HepG2 (cell line): ENCODE measurements at regions of chr10 and their contacts with region 1.

Region 1: GRCh38 chr10:86755740-86756510 is 494 bp upstream of the BMPR1A start:
- DNase-seq: peak; percentile 83
- ATAC-seq: peak; percentile 86
- H3K4me3 ChIP-seq: peak overlapping the region; percentile 64 to 97 (median 83)
- H3K27ac ChIP-seq: peak overlapping the region; percentile 98
- H3K4me1 ChIP-seq: peaks cover 49% of the 10 kb centered on the region
- H3K27me3 ChIP-seq: no peaks in the 10 kb centered on the region; a peak in 1 of 5 replicates
- CTCF ChIP-seq: peak; percentile 8; the same call in 1 of the 2 replicates
- EP300 ChIP-seq: peak in 1 of 2 experiments; percentile 19; a peak in 1 of 4 replicates
- POLR2A ChIP-seq: peak; percentile 74 to 84
- RAD21 ChIP-seq: peak; percentile 58

Region 2: DNA sequence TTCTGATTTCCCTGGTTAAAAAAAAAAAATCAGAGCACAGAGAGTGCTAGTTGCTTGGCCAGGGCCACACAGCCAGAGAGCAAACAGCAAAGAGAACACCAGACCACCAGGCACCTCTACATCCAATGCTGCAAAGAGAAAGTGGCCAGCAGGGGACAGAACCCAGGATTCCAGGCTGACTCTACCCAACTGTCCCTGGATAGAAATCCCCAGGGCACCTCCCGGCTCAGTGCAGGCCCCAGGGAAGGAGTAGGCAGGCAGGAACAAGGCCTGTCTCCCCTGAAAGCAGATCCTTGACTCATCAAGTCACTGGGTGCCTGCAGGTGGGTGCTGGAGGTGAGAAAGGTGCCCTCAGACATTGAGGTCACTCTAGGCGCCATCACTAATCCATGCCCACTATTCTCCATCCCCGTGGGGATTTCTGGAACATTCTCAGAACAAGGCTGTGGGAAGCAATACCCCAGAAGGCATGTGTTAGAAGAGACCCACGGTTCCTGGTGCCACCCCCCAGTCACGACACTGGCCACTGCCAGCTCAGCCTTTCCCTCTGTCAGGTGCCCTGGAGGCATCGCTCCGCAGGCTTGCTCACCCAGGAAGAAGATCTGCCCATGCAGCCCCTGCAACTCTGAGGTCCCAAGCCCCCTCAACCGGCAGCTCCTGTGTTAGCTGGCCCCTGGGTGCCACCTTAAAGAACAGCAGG is 544.1 kb before region 1 on chr10:
- CTCF ChIA-PET with region 1: no interaction called
- POLR2A ChIA-PET with region 1: no interaction called
- in situ Hi-C with region 1: no loop called
- intact Hi-C with region 1: no loop called
- DNase-seq: no peak
- ATAC-seq: no peak
- H3K4me3 ChIP-seq: no peak overlapping the region
- H3K27ac ChIP-seq: no peak overlapping the region
- H3K4me1 ChIP-seq: peaks cover 14% of the 10 kb centered on the region
- H3K27me3 ChIP-seq: peaks cover 4% of the 10 kb centered on the region in 2 experiments; a peak in 2 of 5 replicates
- CTCF ChIP-seq: no peak
- EP300 ChIP-seq: no peak
- POLR2A ChIP-seq: no peak
- RAD21 ChIP-seq: no peak

Region 3: GRCh38 chr10:86710987-86711512 is 44.9 kb before region 1 on chr10:
- CTCF ChIA-PET with region 1: interaction called, 4 read pairs
- POLR2A ChIA-PET with region 1: interaction called, 15 read pairs
- in situ Hi-C with region 1: no loop called
- intact Hi-C with region 1: loop called (anchors 1 kb)
- DNase-seq: peak; percentile 62
- ATAC-seq: peak; percentile 88
- H3K4me3 ChIP-seq: peak overlapping the region; percentile 65 to 80 (median 78); a peak in 5 of 6 replicates
- H3K27ac ChIP-seq: peak overlapping the region; percentile 49
- H3K4me1 ChIP-seq: peaks cover 14% of the 10 kb centered on the region; the same call in 1 of the 2 replicates
- H3K27me3 ChIP-seq: peaks cover 3 to 21% of the 10 kb centered on the region in 2 experiments; a peak in 3 of 5 replicates
- CTCF ChIP-seq: peak; percentile 86
- EP300 ChIP-seq: no peak
- POLR2A ChIP-seq: peak; percentile 20 to 31; a peak in 1 of 4 replicates
- RAD21 ChIP-seq: peak; percentile 97

Region 4: GRCh38 chr10:86775056-86775869 is 19.3 kb after region 1 on chr10:
- CTCF ChIA-PET with region 1: no interaction called
- POLR2A ChIA-PET with region 1: interaction called, 7 read pairs
- in situ Hi-C with region 1: no loop called
- intact Hi-C with region 1: loop called (anchors 2 kb)
- DNase-seq: peak; percentile 75
- ATAC-seq: peak; percentile 95
- H3K4me3 ChIP-seq: no peak overlapping the region; a peak in 2 of 6 replicates
- H3K27ac ChIP-seq: peak overlapping the region; percentile 51
- H3K4me1 ChIP-seq: peaks cover 41% of the 10 kb centered on the region
- H3K27me3 ChIP-seq: no peaks in the 10 kb centered on the region
- CTCF ChIP-seq: no peak
- EP300 ChIP-seq: peak in 1 of 2 experiments; percentile 72; a peak in 2 of 4 replicates
- POLR2A ChIP-seq: no peak
- RAD21 ChIP-seq: no peak